ENCODE measurements at regions of chr4 and their contacts with region 1.

Region 1: DNA sequence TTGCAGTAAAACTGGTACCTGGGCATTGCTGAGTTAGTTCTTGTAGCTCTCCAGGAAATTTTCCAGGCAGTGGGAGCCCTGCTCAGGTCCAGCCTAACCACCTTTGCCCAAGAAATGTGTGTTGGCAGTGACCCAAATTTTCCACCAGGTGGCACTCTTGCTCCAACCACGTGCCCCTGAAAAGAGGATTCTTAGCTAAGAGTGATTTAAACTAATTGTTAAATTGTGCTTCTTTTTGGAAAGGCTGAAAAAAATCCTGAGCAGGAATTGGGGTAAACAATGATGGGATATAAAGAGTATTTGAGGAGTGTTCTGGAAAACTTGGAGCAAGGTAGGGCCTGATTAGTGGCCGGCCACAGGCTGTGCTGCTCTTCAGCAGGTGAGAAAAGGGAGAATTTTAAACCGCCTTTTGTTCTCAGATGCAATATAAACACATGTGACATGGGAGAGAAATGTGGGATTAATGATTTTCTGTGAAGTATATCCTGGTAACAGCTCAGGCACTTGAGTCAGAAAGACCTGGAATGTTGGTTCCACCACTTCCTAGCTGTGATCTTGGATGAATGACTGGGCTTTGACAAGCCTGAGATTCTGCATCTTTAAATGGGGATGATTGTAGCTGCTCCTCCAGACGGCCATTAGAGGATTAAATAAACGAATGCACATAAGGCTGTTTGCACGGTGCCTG is 219.6 kb downstream of the PTTG2 start:
- DNase-seq: peak; percentile 54
- ATAC-seq: peak; percentile 75
- H3K4me3 Mint-ChIP-seq: no peak overlapping the region
- H3K27ac Mint-ChIP-seq: peak overlapping the region; percentile 15
- H3K4me1 Mint-ChIP-seq: peaks cover 28% of the 10 kb centered on the region
- H3K27me3 Mint-ChIP-seq: peaks cover 6% of the 10 kb centered on the region
- CTCF ChIP-seq: peak; percentile 96

Region 2: GRCh38 chr4:38069271-38069760 is 110.5 kb before region 1 on chr4:
- CTCF ChIA-PET with region 1: interaction called, 14 read pairs
- POLR2A ChIA-PET with region 1: no interaction called
- intact Hi-C with region 1: no loop called
- DNase-seq: no peak
- ATAC-seq: peak; percentile 45
- H3K4me3 Mint-ChIP-seq: no peak overlapping the region
- H3K27ac Mint-ChIP-seq: no peak overlapping the region
- H3K4me1 Mint-ChIP-seq: peaks cover 16% of the 10 kb centered on the region
- H3K27me3 Mint-ChIP-seq: no peaks in the 10 kb centered on the region
- CTCF ChIP-seq: no peak

Region 3: DNA sequence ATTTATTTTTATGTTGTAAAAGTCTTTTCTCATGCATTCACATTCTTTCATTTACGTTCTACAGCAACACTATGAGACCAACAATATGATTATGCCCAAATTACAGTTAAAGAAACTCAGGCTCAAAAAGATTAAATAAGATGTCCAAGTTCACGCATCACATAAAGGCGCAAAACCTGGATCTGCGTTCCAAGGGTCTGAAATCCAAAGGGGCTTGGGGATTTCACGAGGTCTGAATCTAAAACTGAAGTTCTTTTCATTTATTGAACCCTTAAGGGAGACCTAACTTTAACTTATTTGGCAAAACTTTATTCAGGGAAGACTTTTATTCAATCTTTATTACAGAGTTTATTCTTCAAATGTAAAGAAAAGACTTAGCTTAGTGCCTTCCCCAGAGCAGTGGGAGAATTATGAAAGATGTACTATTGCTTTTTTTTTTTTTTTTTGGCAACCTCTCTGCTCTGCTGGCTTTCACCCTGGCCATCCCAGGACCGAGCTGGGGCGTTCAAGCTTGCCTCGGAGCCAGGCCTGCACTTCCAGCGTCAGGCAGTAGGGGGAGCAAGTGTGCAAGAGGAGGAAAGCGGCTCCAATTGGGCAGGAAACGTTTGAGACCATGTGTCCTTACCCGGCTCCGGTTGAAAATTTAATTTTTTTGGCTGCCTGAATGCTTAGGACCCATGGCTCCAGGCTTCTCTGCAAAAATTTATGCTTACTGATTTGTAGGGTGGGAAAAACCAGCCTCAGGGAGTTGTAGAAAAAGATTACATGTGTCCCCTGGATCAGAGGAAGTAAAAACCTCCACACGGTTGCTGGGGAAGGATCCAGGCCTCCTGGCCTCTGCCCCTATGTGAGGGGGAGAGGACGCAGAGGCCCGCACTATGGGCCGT is 139.9 kb after region 1 on chr4:
- CTCF ChIA-PET with region 1: interaction called, 44 read pairs
- POLR2A ChIA-PET with region 1: interaction called, 3 read pairs
- intact Hi-C with region 1: loop called (anchors 1 kb)
- DNase-seq: peak; percentile 84
- ATAC-seq: peak; percentile 77
- H3K4me3 Mint-ChIP-seq: peak overlapping the region; percentile 78
- H3K27ac Mint-ChIP-seq: peak overlapping the region; percentile 88
- H3K4me1 Mint-ChIP-seq: peaks cover 28% of the 10 kb centered on the region
- H3K27me3 Mint-ChIP-seq: no peaks in the 10 kb centered on the region
- CTCF ChIP-seq: peak; percentile 72

Region 4: DNA sequence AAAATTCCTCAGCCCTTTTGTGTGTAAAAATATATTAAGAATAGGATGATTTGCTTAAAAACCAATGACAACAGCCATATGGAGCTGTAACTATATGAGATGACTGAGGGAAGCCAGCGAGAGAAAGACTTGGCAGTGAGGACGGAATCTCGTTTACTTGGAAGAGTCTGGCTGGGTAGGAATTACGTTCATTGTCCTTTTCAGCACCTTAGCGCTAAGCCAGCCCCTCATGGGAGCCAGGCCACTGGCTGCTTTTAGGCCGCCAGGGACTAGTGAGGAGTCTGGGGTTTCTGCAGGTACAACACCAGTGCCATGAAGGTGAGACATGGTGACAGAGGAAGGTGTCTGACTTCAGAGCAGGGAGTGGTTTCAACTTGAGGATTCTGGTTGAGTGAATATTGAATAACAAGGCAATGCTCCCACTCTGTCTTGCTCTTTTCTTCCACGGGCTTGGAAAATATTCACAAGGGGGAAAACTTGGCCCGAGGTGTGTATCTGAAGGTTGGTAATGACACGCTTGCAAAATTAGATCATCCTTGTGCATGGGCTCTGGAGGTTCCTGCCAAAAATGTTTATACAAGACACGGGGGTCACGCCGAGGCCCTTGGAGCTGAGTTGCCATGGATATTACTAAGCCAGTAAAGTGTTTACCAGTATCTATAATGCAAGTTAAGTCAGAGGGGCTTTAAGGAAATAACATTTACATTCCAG is 501.6 kb after region 1 on chr4:
- CTCF ChIA-PET with region 1: interaction called, 221 read pairs
- POLR2A ChIA-PET with region 1: no interaction called
- intact Hi-C with region 1: no loop called
- DNase-seq: no peak
- ATAC-seq: no peak
- H3K4me3 Mint-ChIP-seq: no peak overlapping the region
- H3K27ac Mint-ChIP-seq: no peak overlapping the region
- H3K4me1 Mint-ChIP-seq: peaks cover 21% of the 10 kb centered on the region
- H3K27me3 Mint-ChIP-seq: no peaks in the 10 kb centered on the region
- CTCF ChIP-seq: no peak

Region 5: DNA sequence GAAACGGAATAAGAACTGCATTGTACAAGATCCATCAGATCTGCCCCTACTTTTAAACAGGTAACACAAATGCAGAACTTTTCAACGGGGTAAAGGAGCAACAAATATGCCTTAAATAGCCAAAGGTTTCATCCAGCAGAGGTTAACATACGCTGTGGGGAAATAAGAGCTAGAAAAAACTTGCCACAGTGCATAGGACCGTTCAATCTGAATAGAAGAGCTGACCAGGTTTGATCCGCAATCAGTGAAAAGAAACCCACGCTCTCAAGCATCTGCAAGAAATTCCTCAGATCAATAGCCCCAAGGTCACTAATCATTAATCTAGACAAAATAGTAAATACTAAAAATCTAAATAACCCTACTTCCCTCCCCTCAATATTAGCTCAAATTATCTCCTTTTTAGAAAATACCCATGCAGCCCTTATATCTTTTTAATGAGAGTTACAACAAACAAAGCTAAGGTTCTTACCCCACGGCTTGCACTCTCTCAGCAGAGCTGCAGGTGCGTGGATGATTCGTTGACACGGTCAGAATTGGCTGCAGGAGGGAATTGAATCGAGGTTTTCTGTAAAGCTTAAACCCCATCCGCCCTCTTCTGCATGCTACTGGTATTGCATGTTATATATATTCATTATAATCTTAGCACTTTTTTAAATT is 602.7 kb after region 1 on chr4 and contains the start of gene TLR10:
- CTCF ChIA-PET with region 1: interaction called, 16 read pairs
- POLR2A ChIA-PET with region 1: no interaction called
- intact Hi-C with region 1: loop called (anchors 1 kb)
- DNase-seq: no peak
- ATAC-seq: peak; percentile 80
- H3K4me3 Mint-ChIP-seq: peak within 1 kb of the TSS; percentile 100
- H3K27ac Mint-ChIP-seq: peak within 1 kb of the TSS; percentile 98
- H3K4me1 Mint-ChIP-seq: peaks cover 64% of the 10 kb centered on the region
- H3K27me3 Mint-ChIP-seq: no peaks in the 10 kb centered on the region
- CTCF ChIP-seq: no peak
- total RNA-seq, gene TLR10: 92.0 and 107 TPM in 2 replicates